Activated CD4-positive, alpha-beta T cell treated with anti-CD3 and anti-CD28 coated beads for 36 hours (primary cell): ENCODE measurements at regions of chr12 and their contacts with region 1.

Region 1: DNA sequence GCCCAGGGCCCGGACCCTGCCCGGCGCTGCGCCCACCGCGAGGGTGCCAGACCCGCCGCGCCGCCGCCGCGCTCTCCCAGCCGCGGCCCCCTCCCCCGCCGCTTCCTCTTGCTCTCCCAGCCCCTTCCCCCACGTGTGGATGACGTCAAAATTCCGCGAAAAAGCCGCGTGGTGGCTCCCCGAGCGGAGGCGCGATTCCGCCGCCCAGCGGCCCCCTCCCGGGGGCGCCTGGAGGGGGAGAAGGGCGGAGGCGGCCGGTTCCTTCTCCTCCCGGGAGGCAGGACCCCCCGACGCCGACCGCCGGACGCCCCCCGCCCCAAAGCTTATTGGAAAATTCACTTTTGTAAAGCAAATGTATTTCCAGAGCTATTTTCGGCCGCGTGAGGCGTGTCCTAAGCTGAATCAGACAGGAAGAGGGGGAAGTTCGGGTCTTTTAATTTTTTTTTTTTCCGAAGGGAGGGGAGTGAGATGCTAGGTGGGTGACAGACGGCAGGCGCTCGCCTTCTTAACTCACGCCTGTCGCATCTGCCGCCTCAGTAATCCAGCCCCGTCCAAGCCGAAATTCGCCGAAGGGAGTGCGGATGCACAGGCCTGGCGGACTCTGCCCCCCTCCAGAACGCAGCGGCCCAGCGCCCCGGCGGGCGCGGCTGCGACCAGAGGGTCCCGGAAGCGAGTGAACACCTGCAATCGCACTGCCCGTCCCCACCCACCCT is 4.1 kb upstream of the CCND2 start:
- DNase-seq: peak; percentile 97
- ATAC-seq: peak; percentile 14
- H3K4me3 Mint-ChIP-seq: peak overlapping the region; percentile 95
- H3K27ac Mint-ChIP-seq: peak overlapping the region; percentile 100
- H3K4me1 Mint-ChIP-seq: peaks cover 23% of the 10 kb centered on the region
- H3K27me3 Mint-ChIP-seq: no peaks in the 10 kb centered on the region

Region 2: DNA sequence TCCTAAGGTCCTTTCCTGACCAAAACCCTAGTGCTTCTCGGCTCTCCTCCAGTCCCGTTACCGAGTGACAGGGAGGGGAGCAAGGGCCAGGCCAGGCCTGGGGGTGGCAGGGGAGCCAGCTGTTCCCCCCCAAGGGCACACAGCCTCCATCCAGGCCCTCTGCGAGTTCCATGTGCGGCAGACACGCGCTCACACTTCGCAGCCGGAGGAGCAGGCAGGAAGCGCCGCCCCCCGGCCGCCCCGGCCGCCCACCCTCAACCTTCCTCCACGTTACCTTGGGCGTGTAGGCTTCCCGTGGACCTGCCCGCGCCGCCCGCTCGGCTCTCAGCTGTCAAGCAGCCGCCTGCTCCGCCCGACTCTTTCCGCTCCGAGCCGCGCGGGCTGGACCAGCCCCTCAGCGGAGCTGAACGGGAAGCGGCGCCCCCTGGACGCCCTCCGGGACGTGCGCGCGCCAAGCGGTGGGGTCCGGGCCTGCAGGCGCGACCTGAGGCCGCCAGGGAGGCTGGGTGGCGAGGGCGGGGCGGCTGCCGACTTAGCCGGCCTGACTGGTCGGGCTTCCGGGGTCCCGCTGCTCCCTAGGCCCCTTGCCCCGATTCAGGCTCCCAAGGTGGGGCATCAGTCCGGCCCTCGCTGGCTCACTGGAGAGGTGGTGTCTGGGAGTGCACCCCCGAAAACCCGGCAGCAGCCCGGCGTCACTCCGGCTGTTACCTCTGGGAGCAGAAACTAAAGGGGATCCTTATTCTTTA is 516.5 kb before region 1 on chr12 and contains the start of gene CRACR2A:
- CTCF ChIA-PET with region 1: no interaction called
- POLR2A ChIA-PET with region 1: no interaction called
- intact Hi-C with region 1: loop called in 1 of 2 experiments (anchors 2 kb)
- DNase-seq: peak; percentile 92
- ATAC-seq: peak; percentile 84
- H3K4me3 Mint-ChIP-seq: peak within 1 kb of the TSS; percentile 86
- H3K27ac Mint-ChIP-seq: peak within 1 kb of the TSS; percentile 96
- H3K4me1 Mint-ChIP-seq: peaks cover 52% of the 10 kb centered on the region
- H3K27me3 Mint-ChIP-seq: no peaks in the 10 kb centered on the region
- total RNA-seq, gene CRACR2A: 19.2 to 22.5 TPM

Region 3: DNA sequence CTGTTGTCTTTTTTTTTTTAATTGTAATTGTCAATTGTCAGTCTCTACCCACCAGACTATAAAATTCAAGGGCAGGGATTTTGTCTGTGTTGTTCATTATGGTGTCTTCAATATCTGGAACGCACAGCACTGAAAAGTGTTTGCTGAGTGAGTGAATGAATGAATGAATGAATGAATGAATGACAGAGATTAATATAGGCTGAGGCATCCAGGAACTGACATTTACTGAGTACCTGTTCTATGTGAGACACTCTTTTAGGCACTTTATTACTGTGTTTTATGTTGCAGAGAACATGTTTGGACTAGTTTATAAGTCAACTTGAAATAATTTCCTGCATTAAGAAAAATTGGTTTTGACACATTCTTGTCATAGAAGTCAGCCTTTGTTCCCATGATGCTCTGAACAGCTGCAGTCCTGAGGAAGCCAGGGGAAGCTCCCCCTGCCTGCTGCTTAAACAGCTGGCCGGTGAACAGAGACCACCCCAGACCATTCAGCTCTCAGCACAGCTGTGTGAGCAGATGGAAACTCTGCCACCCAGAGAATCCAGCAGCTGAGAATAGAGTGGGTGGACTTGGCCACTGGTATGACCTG is 156.6 kb before region 1 on chr12:
- CTCF ChIA-PET with region 1: interaction called, 14 read pairs
- POLR2A ChIA-PET with region 1: interaction called, 5 read pairs
- intact Hi-C with region 1: loop called in 1 of 2 experiments (anchors 1 kb)
- DNase-seq: no peak
- ATAC-seq: peak; percentile 35
- H3K4me3 Mint-ChIP-seq: no peak overlapping the region
- H3K27ac Mint-ChIP-seq: no peak overlapping the region
- H3K4me1 Mint-ChIP-seq: peaks cover 59% of the 10 kb centered on the region
- H3K27me3 Mint-ChIP-seq: peaks cover 11% of the 10 kb centered on the region

Region 4: DNA sequence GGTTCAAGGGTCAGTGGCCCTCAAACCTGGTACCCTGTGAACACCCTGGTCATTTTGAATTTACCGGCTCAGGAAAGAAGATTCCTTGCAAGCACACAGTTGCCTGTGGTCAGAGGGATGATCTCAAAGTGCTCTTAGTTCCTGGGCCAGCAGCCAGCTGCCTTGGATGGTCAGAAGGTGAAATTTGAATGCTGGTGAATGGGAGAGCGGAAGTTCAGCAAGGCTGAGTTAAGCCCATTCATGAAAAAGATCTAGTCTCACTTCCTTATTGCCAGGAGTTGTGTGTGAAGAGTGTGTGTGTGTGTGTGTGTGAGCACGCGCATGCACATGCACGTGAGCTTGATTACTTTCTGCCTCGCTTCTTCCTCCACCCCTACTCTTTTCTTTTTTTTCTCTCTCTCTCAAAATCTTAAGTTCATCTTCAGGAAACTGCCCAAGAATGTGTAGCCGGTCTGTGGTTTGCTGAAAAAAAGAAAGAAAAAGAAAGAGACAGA is 151.4 kb before region 1 on chr12:
- CTCF ChIA-PET with region 1: interaction called, 3 read pairs
- POLR2A ChIA-PET with region 1: interaction called, 3 read pairs
- intact Hi-C with region 1: loop called (anchors 1 to 2 kb)
- DNase-seq: no peak
- ATAC-seq: no peak
- H3K4me3 Mint-ChIP-seq: peak overlapping the region; percentile 38
- H3K27ac Mint-ChIP-seq: peak overlapping the region; percentile 86
- H3K4me1 Mint-ChIP-seq: peaks cover 63% of the 10 kb centered on the region
- H3K27me3 Mint-ChIP-seq: peaks cover 3% of the 10 kb centered on the region

Region 5: DNA sequence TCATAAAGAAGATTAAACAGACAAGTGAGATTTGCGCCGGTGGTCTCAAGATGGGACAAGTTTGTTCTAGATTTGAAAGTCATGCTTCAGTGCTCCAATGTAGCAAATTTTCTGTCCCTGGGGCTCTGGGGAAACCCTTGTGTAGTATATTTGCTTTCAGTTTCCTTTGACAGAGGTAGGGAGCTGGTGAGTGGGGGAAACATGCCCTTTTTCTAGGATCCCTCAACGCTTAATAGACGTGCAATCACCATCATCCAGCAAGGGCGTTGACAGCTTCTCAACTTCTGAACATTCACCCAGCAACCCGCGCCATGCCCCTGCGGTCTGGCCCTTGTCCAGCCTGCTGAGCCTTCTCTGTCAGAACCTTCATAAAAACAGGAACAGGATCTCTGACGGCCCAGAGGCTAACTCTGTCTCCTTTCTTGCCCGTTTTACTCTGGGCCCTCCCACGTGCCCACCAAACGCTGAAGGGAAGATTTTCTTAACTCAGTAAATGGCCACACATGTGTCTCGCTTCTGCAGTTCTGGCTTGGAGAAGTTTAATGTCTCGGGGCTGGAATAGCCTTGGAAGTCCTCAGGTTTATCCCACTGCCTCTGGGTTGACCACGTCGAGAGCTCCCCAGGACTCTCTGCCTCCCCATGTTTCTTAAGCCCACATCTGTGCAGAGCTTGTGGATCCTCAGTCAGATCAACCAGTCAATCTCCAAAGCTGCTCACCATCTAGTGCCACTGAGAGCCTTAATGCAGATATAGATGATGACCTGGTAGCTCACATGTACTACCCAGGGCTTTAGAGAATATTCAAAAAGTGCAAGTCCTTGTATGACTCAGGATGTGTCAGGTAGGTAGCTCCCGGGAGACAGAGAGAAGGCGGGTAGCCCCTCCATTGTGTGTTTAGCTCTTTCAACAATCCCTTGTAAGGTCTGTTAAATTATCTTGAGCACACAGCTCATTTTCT is 53.9 kb before region 1 on chr12:
- CTCF ChIA-PET with region 1: interaction called, 6 read pairs
- POLR2A ChIA-PET with region 1: interaction called, 5 read pairs
- intact Hi-C with region 1: loop called in 1 of 2 experiments (anchors 2 kb)
- DNase-seq: peak; percentile 63
- ATAC-seq: peak; percentile 91
- H3K4me3 Mint-ChIP-seq: peak overlapping the region; percentile 43
- H3K27ac Mint-ChIP-seq: peak overlapping the region; percentile 84
- H3K4me1 Mint-ChIP-seq: peaks cover 29% of the 10 kb centered on the region
- H3K27me3 Mint-ChIP-seq: no peaks in the 10 kb centered on the region

Region 6: GRCh38 chr12:4320853-4321701 is 51.6 kb after region 1 on chr12 and contains the start of gene TIGAR:
- CTCF ChIA-PET with region 1: no interaction called
- POLR2A ChIA-PET with region 1: no interaction called
- intact Hi-C with region 1: loop called in 1 of 2 experiments (anchors 2 kb)
- DNase-seq: peak; percentile 96
- ATAC-seq: peak; percentile 99
- H3K4me3 Mint-ChIP-seq: peak within 1 kb of the TSS; percentile 89
- H3K27ac Mint-ChIP-seq: peak within 1 kb of the TSS; percentile 85
- H3K4me1 Mint-ChIP-seq: peaks cover 33% of the 10 kb centered on the region
- H3K27me3 Mint-ChIP-seq: no peaks in the 10 kb centered on the region
- total RNA-seq, gene TIGAR: 7.1 to 8.4 TPM